ENCODE measurements at regions of chr17 and their contacts with region 1.

Region 1: GRCh38 chr17:21511363-21512198 is 135.4 kb downstream of the KCNJ12 start:
- DNase-seq: no peak
- H3K4me3 ChIP-seq: peak overlapping the region; percentile 49 to 50
- H3K27ac ChIP-seq: peak overlapping the region; percentile 60
- H3K4me1 ChIP-seq: peaks cover 19% of the 10 kb centered on the region
- H3K27me3 ChIP-seq: no peaks in the 10 kb centered on the region
- CTCF ChIP-seq: peak; percentile 8 to 61 (median 61)
- POLR2A ChIP-seq: no peak

Region 2: GRCh38 chr17:21252796-21253645 is 258.6 kb before region 1 on chr17 and contains the start of gene NATD1:
- intact Hi-C with region 1: loop called (anchors 10 kb)
- DNase-seq: no peak
- H3K4me3 ChIP-seq: peak within 1 kb of the TSS; percentile 56 to 75
- H3K27ac ChIP-seq: peak within 1 kb of the TSS; percentile 76
- H3K4me1 ChIP-seq: peaks cover 32% of the 10 kb centered on the region
- H3K27me3 ChIP-seq: no peaks in the 10 kb centered on the region
- CTCF ChIP-seq: no peak
- POLR2A ChIP-seq: peak in 1 of 2 donors; percentile 17
- total RNA-seq, gene NATD1: 4.2 TPM

Region 3: DNA sequence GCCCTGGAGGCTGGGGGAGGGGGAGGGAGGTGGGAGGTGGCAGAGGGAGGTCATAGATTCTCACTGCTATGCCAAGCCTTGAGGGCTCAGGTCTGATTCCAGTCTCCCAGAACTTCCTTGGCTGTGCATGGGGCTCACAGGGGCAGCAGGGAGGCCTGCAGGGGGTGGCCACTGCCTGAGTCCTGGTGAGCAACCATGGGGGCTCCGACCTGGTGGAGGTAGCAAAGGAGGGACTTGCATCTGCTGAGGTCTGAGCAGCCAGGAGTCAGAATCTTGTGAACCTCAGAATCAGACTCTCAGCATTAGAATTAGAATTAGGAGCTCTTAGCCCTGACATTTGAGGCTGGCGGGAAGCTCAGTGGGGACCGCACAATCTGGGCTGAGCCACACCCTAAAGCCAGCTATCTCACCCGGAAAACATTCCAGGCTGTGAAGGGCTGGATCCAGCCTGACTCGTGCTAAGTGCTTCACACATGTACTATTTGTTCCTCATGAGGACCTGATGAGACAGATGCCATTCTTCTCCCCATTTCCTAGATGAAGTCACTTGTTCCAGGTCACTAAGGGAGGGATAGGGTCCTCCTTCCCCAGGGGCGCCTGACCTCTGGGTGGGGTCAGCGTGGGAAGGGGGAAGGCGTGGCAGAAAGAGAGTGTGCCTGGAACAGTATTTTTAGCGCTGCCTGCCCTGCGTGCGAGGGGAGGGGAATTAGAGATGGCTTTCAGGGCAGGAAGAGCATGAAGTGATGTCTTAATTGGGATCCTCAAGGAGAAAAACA is 152.7 kb before region 1 on chr17:
- intact Hi-C with region 1: no loop called
- DNase-seq: no peak
- H3K4me3 ChIP-seq: no peak overlapping the region
- H3K27ac ChIP-seq: no peak overlapping the region
- H3K4me1 ChIP-seq: no peaks in the 10 kb centered on the region
- H3K27me3 ChIP-seq: no peaks in the 10 kb centered on the region
- CTCF ChIP-seq: no peak
- POLR2A ChIP-seq: no peak

Region 4: GRCh38 chr17:21457051-21458026 is 54.2 kb before region 1 on chr17:
- intact Hi-C with region 1: loop called (anchors 5 kb)
- DNase-seq: peak in 1 of 2 donors; percentile 88
- H3K4me3 ChIP-seq: no peak overlapping the region
- H3K27ac ChIP-seq: peak overlapping the region; percentile 48
- H3K4me1 ChIP-seq: peaks cover 25% of the 10 kb centered on the region
- H3K27me3 ChIP-seq: no peaks in the 10 kb centered on the region
- CTCF ChIP-seq: peak; percentile 40 to 76 (median 70)
- POLR2A ChIP-seq: no peak

Region 5: DNA sequence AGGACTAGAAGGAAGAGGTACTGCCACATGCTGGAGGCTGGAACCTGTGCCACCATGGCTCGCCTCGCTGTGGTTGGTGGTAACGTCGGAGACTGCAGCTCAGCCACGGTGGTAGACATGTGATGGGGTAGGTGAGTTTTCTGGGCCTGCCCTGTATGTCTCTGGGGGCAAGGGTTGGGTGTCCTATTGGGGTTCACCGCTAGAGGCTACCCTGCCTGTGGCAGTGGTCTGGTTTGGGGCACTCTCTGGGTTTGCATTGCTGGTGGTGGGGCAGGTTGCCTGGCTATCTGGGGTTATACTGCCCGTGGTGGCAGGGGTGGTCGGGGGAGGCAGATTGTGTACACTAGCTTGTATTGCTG is 101.5 kb after region 1 on chr17:
- intact Hi-C with region 1: no loop called
- DNase-seq: no peak
- H3K4me3 ChIP-seq: no peak overlapping the region
- H3K27ac ChIP-seq: no peak overlapping the region
- H3K4me1 ChIP-seq: no peaks in the 10 kb centered on the region
- H3K27me3 ChIP-seq: no peaks in the 10 kb centered on the region
- CTCF ChIP-seq: no peak
- POLR2A ChIP-seq: no peak